Heart left ventricle (tissue), 16 donors: ENCODE measurements at regions of chr2 and their contacts with region 1.

Region 1: GRCh38 chr2:118046634-118047210 is 32.9 kb upstream of the CCDC93 start:
- DNase-seq: no peak
- ATAC-seq: peak in 1 of 4 donors; percentile 43
- H3K4me3 ChIP-seq: peak overlapping the region in 1 of 12 donors; percentile 0
- H3K27ac ChIP-seq: no peak overlapping the region
- H3K4me1 ChIP-seq: peaks cover 0 to 6% (median 0%) of the 10 kb centered on the region in 12 donors
- H3K27me3 ChIP-seq: peaks cover 0 to 63% (median 13%) of the 10 kb centered on the region in 9 donors
- CTCF ChIP-seq: peak; percentile 24 to 73 (median 54)
- POLR2A ChIP-seq: no peak

Region 2: GRCh38 chr2:117943013-117943672 is 103.6 kb before region 1 on chr2:
- intact Hi-C with region 1: no loop called
- DNase-seq: no peak
- ATAC-seq: no peak
- H3K4me3 ChIP-seq: no peak overlapping the region
- H3K27ac ChIP-seq: no peak overlapping the region
- H3K4me1 ChIP-seq: no peaks in the 10 kb centered on the region
- H3K27me3 ChIP-seq: no peaks in the 10 kb centered on the region
- CTCF ChIP-seq: no peak
- POLR2A ChIP-seq: no peak

Region 3: DNA sequence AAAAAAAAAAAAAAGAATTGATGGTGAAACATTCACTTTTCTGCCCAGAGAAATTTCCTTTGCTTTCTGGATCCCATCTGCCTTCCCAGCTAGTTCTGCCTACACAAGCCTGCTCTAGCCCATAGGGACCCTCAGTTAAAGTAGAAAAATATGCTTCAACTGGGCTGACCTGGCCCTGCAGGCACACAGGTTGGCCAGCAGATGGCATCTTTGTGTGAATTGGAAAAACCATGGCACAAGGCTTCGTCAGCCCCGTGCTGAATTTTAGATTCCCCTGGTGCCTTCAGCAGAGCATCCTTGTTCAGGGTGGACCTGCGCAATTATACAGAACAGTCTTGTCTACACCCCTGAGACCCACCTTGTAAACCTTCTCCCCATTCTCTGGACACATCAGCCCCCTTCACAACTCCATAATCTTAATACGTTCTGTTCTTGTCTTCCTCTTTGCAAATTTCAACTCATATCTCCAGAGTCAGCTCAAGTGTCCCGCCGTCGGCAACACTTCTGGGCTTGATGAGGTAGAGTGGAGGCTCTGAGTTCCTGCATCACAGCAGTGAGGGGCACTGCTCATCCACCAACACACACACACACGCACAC is 156.1 kb after region 1 on chr2:
- intact Hi-C with region 1: loop called in 1 of 10 experiments (anchors 10 kb)
- DNase-seq: no peak
- ATAC-seq: peak in 3 of 4 donors; percentile 26 to 56 (median 46)
- H3K4me3 ChIP-seq: no peak overlapping the region
- H3K27ac ChIP-seq: no peak overlapping the region
- H3K4me1 ChIP-seq: no peaks in the 10 kb centered on the region
- H3K27me3 ChIP-seq: peaks cover 0 to 49% (median 6%) of the 10 kb centered on the region in 9 donors
- CTCF ChIP-seq: peak; percentile 50 to 84 (median 64)
- POLR2A ChIP-seq: no peak

Region 4: DNA sequence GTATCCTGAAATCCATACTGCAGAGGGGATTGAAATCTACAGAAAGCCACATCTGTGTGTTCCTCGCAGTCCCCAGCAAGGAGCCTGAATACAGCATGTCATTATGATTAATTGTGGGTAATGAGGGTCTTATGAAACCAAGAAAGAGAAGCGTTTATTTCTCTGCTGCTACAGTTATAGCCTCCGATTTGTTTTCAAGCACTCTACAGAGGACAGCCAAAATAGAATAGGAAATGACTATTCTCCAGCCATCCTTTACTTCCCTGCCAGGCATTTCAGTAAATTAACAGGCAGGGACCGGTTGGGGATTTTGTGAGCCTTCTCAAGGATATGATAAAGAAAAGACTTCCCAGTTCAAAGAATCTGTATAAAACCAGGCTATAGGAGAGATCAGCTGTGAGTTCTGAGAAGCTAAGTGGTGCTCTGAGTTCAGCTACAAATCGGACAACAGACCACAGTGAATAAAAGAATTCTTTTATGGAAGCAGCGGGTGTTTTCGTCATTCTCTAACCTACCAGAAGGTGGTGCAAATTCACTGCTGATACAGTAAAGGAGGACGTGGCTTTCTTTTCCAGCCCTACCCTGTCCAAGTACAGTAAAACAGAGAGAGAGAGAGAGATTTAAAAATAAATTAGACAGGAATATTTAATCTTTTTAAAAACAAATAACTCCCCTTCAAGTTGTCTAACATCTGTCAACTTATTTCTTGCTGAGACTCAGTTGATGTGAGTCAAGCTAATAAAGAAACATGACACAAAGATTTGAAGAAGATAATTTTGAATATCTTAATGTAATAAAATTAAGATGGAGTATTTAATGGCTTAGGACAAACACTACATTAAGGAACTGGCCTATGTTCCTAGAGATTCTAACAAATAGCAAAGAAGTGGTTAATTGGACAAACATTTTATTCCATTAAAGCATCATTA is 175.2 kb after region 1 on chr2:
- intact Hi-C with region 1: loop called in 1 of 10 experiments (anchors 10 kb)
- DNase-seq: peak in 2 of 5 donors; percentile 11 to 27
- ATAC-seq: peak; percentile 55 to 82 (median 76)
- H3K4me3 ChIP-seq: no peak overlapping the region
- H3K27ac ChIP-seq: no peak overlapping the region
- H3K4me1 ChIP-seq: peaks cover 0 to 20% (median 11%) of the 10 kb centered on the region in 12 donors
- H3K27me3 ChIP-seq: peaks cover 42 to 98% (median 80%) of the 10 kb centered on the region in 9 donors
- CTCF ChIP-seq: peak; percentile 40 to 68 (median 58)
- POLR2A ChIP-seq: no peak

Region 5: DNA sequence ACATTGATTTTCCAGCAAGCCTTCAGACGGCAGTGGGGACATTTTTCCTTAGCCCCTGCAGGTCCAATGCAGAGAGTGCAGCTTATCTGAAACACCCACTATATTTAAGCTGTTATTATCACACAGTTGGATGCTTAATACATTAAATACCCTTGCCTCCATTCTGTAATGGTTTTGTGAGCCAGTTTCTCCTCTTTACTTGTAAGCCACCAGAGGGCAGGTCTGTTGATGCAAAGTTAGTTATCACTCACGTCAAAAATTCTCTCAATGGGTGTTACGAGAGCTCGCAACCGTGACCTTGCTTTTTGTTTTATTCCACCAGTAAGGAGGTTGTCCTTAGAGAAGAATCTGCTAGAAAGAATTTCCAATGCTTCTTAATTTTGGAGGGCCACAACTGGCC is 231.3 kb after region 1 on chr2:
- intact Hi-C with region 1: no loop called
- DNase-seq: no peak
- ATAC-seq: no peak
- H3K4me3 ChIP-seq: no peak overlapping the region
- H3K27ac ChIP-seq: no peak overlapping the region
- H3K4me1 ChIP-seq: no peaks in the 10 kb centered on the region
- H3K27me3 ChIP-seq: peaks cover 0 to 45% (median 0%) of the 10 kb centered on the region in 9 donors
- CTCF ChIP-seq: no peak
- POLR2A ChIP-seq: no peak

Region 6: GRCh38 chr2:118309946-118310680 is 263.4 kb after region 1 on chr2:
- intact Hi-C with region 1: loop called in 1 of 10 experiments (anchors 10 kb)
- DNase-seq: peak in 2 of 5 donors; percentile 17 to 63
- ATAC-seq: no peak
- H3K4me3 ChIP-seq: peak overlapping the region; percentile 23 to 67 (median 48)
- H3K27ac ChIP-seq: peak overlapping the region in 1 of 12 donors; percentile 59
- H3K4me1 ChIP-seq: peaks cover 0 to 10% (median 0%) of the 10 kb centered on the region in 12 donors
- H3K27me3 ChIP-seq: peaks cover 11 to 48% (median 28%) of the 10 kb centered on the region in 9 donors
- CTCF ChIP-seq: no peak
- POLR2A ChIP-seq: no peak

Region 7: DNA sequence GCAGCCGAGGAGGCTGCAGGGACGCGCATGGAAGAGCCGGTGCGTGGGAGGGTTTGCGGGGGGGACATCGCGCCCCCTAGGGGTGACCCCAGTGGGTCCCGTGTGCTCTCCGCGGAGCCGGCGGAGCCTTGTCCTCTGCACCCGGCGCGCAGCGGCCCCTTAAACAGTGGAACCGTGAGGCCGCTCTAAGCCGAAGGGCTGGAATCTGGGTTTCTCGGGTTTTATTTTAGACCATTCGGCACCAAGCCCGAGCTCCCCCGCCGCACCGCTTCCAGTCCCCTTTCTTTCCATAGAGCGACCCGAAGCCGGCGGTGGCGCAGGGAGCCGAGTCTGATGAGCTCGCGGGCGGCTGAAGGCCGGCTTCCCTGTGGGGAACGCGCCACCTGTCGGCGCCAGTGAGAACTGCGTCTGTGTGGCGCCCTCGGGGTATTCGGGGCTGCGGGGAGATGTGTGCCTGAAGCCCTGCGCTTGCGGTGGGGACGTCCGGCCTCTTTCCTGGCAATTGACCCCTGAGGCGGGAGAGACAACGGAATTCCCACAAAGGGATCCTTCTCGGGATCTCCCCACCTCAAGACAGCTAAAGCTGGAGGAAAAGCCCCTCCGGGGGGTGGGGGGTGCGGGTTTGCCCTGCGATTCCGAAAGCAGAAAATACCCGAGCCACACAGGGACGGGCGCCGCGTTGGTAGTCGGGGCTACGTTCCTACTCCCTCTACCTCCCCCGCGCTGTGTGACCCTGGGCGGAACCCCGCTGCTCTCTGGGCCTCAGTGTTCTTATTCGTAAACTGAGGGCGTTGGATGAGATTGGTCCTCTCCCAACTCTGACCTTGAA is 808.9 kb after region 1 on chr2:
- intact Hi-C with region 1: loop called (anchors 2 to 5 kb)
- DNase-seq: peak; percentile 68 to 87 (median 73)
- ATAC-seq: peak; percentile 76 to 95 (median 86)
- H3K4me3 ChIP-seq: peak overlapping the region in 11 of 12 donors; percentile 4 to 43 (median 29)
- H3K27ac ChIP-seq: no peak overlapping the region
- H3K4me1 ChIP-seq: peaks cover 0 to 56% (median 10%) of the 10 kb centered on the region in 12 donors
- H3K27me3 ChIP-seq: peaks cover 78 to 100% (median 98%) of the 10 kb centered on the region in 9 donors
- CTCF ChIP-seq: peak; percentile 88 to 99 (median 96)
- POLR2A ChIP-seq: no peak

Region 8: DNA sequence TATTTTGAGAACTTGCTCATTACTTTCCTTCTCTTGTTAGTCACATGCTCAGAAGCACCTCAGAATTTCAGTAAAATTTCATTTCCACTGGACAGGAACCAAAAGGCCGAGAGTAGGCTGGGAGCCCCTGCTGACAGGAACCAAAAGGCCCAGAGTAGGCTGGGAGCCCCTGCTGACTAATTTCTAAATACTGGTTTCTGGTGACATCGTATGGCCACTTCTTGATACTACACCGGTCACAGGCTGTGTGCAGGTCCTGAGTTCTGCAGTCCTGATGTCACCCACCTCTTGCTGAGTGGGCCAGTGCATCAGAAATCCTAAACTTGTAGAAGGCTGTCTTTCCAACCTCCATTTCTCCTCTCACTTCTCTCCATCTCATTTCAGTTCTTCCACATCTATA is 818.4 kb after region 1 on chr2:
- intact Hi-C with region 1: loop called in 3 of 10 experiments (anchors 2 to 5 kb)
- DNase-seq: no peak
- ATAC-seq: peak in 3 of 4 donors; percentile 78 to 82 (median 82)
- H3K4me3 ChIP-seq: no peak overlapping the region
- H3K27ac ChIP-seq: no peak overlapping the region
- H3K4me1 ChIP-seq: no peaks in the 10 kb centered on the region
- H3K27me3 ChIP-seq: peaks cover 11 to 59% (median 27%) of the 10 kb centered on the region in 9 donors
- CTCF ChIP-seq: peak; percentile 30 to 66 (median 53)
- POLR2A ChIP-seq: no peak